ENCODE measurements at regions of chr5 and their contacts with region 1.

Region 1: GRCh38 chr5:97231025-97231636 is 48.1 kb upstream of the RIOK2 start:
- DNase-seq: peak in 4 of 10 donors; percentile 6 to 45 (median 24)
- H3K4me3 ChIP-seq: peak overlapping the region in 10 of 59 donors; percentile 0 to 33 (median 18)
- H3K27ac ChIP-seq: no peak overlapping the region
- H3K27me3 ChIP-seq: no peaks in the 10 kb centered on the region
- CTCF ChIP-seq: peak; percentile 68 to 95 (median 82)

Region 2: GRCh38 chr5:98796197-98796972 is 1565.3 kb after region 1 on chr5:
- intact Hi-C with region 1: loop called in 1 of 2 experiments (anchors 10 kb)
- DNase-seq: peak in 1 of 10 donors; percentile 26
- H3K4me3 ChIP-seq: peak overlapping the region in 1 of 59 donors; percentile 22
- H3K27ac ChIP-seq: no peak overlapping the region
- H3K27me3 ChIP-seq: no peaks in the 10 kb centered on the region
- CTCF ChIP-seq: peak; percentile 55 to 83 (median 71)

Measured in dorsolateral prefrontal cortex (tissue), 120 donors.